ENCODE measurements at regions of chr2 and their contacts with region 1.

Region 1: DNA sequence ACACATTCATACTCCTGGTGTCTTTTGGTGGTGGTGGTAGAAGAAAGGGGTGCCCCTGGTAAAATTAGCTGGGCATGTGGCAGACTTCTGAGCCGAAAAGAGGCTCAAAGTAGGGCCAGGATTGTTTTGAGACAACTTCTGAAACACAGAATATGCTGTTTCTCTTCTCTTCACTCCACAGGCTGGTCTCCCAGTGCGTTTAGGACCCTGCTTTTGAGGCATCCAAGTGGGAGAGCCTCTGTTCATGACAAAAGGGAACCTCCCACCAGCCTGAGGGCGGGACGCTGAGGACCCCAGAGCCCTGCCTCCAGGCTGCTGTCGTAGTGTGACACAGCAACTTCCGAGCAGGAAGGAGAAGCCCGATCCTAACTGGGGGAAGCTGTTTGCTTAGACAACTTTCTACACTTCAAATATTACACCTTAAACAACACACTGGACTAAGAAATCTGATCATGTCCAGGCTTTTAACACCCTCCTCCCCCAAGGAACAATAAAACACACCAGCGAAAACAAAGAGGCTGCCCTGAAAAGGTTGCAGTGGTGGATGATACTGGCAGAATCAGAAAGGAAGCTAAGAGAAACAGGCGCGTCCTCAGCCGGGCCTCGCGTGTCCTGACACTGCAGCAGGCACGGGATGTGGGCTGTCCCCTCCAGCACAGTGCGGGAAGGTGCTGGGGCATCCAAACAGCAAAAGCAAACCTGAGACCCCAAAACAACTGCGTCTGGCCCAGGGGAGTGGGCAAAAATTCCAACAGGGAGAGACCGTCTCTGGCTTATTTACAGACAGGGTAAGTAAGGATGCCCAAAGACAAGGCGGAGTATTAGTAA is 9.3 kb downstream of the SERTAD2 start:
- DNase-seq: peak; percentile 63
- H3K4me3 Mint-ChIP-seq: peak overlapping the region; percentile 82
- H3K27ac Mint-ChIP-seq: peak overlapping the region; percentile 78
- H3K4me1 Mint-ChIP-seq: peaks cover 53% of the 10 kb centered on the region
- H3K27me3 Mint-ChIP-seq: no peaks in the 10 kb centered on the region

Region 2: GRCh38 chr2:64609227-64609941 is 35.0 kb before region 1 on chr2:
- CTCF ChIA-PET with region 1: interaction called, 31 read pairs
- POLR2A ChIA-PET with region 1: interaction called, 10 read pairs
- intact Hi-C with region 1: no loop called
- DNase-seq: peak; percentile 75
- H3K4me3 Mint-ChIP-seq: peak overlapping the region; percentile 57
- H3K27ac Mint-ChIP-seq: no peak overlapping the region
- H3K4me1 Mint-ChIP-seq: peaks cover 26% of the 10 kb centered on the region
- H3K27me3 Mint-ChIP-seq: no peaks in the 10 kb centered on the region

Region 3: DNA sequence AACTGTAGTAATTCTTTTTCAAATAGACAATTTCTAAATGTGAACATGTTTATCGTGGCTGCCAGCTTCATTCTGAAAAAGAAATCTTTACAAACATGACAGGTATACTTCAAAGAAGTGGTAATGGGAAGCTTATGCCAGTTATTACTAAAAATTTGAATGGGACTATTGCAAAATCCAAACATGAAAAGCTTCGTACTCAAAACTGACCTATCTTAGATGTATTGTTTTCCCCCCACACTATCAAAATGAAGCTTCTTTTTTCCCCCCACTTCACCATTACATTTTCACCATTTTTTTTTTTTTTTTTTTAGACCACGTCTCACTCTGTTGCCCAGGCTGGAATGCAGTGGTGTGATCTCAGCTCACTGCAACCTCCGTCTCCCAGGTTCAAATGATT is 59.8 kb after region 1 on chr2:
- CTCF ChIA-PET with region 1: interaction called, 14 read pairs
- POLR2A ChIA-PET with region 1: no interaction called
- intact Hi-C with region 1: loop called (anchors 2 kb)
- DNase-seq: no peak
- H3K4me3 Mint-ChIP-seq: no peak overlapping the region
- H3K27ac Mint-ChIP-seq: no peak overlapping the region
- H3K4me1 Mint-ChIP-seq: peaks cover 24% of the 10 kb centered on the region
- H3K27me3 Mint-ChIP-seq: no peaks in the 10 kb centered on the region

Region 4: GRCh38 chr2:64742678-64743077 is 98.3 kb after region 1 on chr2:
- CTCF ChIA-PET with region 1: interaction called, 10 read pairs
- POLR2A ChIA-PET with region 1: no interaction called
- intact Hi-C with region 1: no loop called
- DNase-seq: no peak
- H3K4me3 Mint-ChIP-seq: no peak overlapping the region
- H3K27ac Mint-ChIP-seq: no peak overlapping the region
- H3K4me1 Mint-ChIP-seq: peaks cover 8% of the 10 kb centered on the region
- H3K27me3 Mint-ChIP-seq: no peaks in the 10 kb centered on the region

Region 5: GRCh38 chr2:64873472-64873924 is 229.1 kb after region 1 on chr2:
- CTCF ChIA-PET with region 1: interaction called, 48 read pairs
- POLR2A ChIA-PET with region 1: no interaction called
- intact Hi-C with region 1: no loop called
- DNase-seq: peak; percentile 89
- H3K4me3 Mint-ChIP-seq: peak overlapping the region; percentile 23
- H3K27ac Mint-ChIP-seq: no peak overlapping the region
- H3K4me1 Mint-ChIP-seq: peaks cover 7% of the 10 kb centered on the region
- H3K27me3 Mint-ChIP-seq: peaks cover 2% of the 10 kb centered on the region

Region 6: DNA sequence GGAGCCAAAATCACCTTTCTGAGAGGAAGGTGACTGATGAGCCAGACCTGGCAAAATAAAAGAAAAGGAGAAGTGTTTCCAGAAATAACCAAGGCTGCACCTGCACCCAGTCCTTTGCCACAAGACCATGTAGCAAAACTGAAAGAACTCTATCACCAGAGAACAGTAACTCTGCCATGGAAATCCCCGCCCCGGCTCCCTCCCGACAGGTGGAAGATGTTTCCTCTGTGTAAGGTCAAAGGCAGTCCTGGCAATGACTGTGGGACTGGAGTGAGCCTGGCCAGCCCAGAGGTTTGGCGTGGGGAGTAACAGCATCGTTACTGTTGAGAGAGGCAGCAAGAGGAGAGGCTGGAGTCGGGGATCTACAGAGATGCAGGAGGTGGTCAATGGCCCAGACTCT is 745.7 kb after region 1 on chr2:
- CTCF ChIA-PET with region 1: no interaction called
- POLR2A ChIA-PET with region 1: no interaction called
- intact Hi-C with region 1: no loop called
- DNase-seq: peak; percentile 57
- H3K4me3 Mint-ChIP-seq: no peak overlapping the region
- H3K27ac Mint-ChIP-seq: no peak overlapping the region
- H3K4me1 Mint-ChIP-seq: peaks cover 10% of the 10 kb centered on the region
- H3K27me3 Mint-ChIP-seq: no peaks in the 10 kb centered on the region

Measured in activated CD4-positive, alpha-beta memory T cell treated with anti-CD3 and anti-CD28 coated beads for 36 hours (primary cell).